A549 (cell line): ENCODE measurements at regions of chr20 and their contacts with region 1.

Region 1: DNA sequence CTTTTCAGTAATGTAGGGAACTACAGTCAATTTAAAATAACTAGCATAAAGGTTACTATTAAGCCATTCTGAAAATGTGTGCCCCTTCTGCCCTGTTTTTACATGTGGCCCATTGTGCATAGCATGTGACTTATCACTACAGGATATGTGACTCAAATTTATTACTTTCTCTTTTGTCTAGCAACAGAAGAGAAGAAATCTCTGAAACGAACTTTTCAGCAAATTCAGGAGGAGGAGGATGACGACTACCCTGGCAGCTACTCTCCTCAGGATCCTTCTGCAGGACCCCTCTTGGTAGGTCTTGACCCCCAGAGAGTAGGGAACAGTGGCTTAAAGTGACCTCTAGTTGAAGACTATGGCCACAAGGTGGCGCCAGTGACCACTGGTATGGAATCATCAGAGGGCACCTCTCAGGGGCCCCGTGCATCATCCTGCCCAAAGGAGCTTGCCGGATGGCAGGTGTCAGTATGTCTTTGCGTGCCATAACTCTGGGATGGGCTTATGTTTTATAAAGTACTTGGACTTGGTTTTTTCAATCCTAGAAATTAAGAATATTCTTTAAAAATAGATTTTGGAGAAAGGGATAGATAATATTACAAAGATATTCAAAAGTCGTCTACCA is 23.9 kb downstream of the RPRD1B start:
- DNase-seq: peak; percentile 81 to 82
- ATAC-seq: peak; percentile 94 to 99
- H3K4me3 ChIP-seq: no peak overlapping the region
- H3K27ac ChIP-seq: peak overlapping the region; percentile 29 to 47; a peak in 1 of 6 replicates
- H3K4me1 ChIP-seq: peaks cover 26% of the 10 kb centered on the region
- CTCF ChIP-seq: peak; percentile 96
- EP300 ChIP-seq: no peak
- POLR2A ChIP-seq: no peak
- RAD21 ChIP-seq: peak; percentile 96 to 98

Region 2: GRCh38 chr20:38073307-38074071 is 16.0 kb after region 1 on chr20:
- CTCF ChIA-PET with region 1: interaction called, 35 read pairs
- POLR2A ChIA-PET with region 1: no interaction called
- DNase-seq: peak in 1 of 2 experiments; percentile 22
- ATAC-seq: peak in 1 of 2 experiments; percentile 26; a peak in 1 of 6 replicates
- H3K4me3 ChIP-seq: no peak overlapping the region
- H3K27ac ChIP-seq: no peak overlapping the region
- H3K4me1 ChIP-seq: no peaks in the 10 kb centered on the region
- CTCF ChIP-seq: peak; percentile 46
- EP300 ChIP-seq: no peak
- POLR2A ChIP-seq: no peak
- RAD21 ChIP-seq: peak; percentile 25 to 40; a peak in 4 of 5 replicates

Region 3: DNA sequence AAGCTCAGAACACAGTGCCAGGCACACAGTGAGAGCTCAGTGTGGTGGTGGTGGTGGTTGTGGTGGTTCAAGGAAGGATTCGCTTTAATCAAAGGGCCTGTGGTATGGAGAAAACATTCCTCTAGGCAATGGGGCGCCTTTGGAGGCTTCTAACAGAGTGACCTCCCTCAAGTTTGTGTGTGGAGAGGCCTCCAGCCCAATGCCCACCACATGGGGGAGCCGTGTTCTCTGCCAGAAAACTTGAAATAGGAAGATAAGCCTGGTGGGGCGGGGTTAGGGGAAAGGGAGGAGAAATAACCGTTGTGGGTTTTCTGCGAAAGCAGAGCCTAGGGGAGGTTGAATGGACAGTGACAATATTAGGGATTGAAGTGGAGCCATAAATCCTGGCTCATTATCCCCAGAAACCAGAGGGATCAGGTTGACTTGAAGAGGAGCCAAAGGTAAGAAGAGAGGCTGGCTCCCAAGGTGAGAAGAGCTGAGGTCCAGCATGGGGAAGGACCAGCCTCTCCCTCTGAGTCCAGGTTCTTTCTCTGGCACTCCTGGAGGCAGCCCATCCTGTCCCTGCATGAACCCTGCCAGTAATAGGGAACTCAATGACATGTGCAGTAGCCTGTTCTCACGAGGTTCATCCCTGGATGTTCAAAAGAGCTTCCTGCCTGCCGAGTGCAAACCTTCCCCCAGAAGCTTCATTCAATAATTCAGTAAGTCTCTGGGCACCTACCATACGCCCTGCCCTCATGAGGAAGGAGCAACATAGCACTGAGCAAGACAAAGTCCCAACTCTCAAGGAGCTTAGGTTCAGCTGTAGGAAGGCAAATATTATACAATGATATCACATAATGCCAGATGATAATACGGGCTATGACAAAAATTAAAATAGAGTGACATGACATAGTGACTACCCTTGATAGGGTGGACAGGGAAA is 56.2 kb after region 1 on chr20:
- CTCF ChIA-PET with region 1: interaction called, 14 read pairs
- POLR2A ChIA-PET with region 1: interaction called, 6 read pairs
- DNase-seq: peak in 1 of 2 experiments; percentile 67
- ATAC-seq: peak in 1 of 2 experiments; percentile 61; a peak in 3 of 6 replicates
- H3K4me3 ChIP-seq: no peak overlapping the region
- H3K27ac ChIP-seq: peak overlapping the region; percentile 80 to 88
- H3K4me1 ChIP-seq: peaks cover 60% of the 10 kb centered on the region
- CTCF ChIP-seq: peak; percentile 35; the same call in 2 of the 3 replicates
- EP300 ChIP-seq: no peak
- POLR2A ChIP-seq: no peak
- RAD21 ChIP-seq: peak; percentile 43 to 62

Region 4: GRCh38 chr20:38143646-38144554 is 86.4 kb after region 1 on chr20:
- CTCF ChIA-PET with region 1: interaction called, 28 read pairs
- POLR2A ChIA-PET with region 1: interaction called, 3 read pairs
- DNase-seq: peak; percentile 63 to 91
- ATAC-seq: peak; percentile 69 to 74
- H3K4me3 ChIP-seq: no peak overlapping the region
- H3K27ac ChIP-seq: peak overlapping the region; percentile 83 to 95
- H3K4me1 ChIP-seq: peaks cover 75% of the 10 kb centered on the region
- CTCF ChIP-seq: no peak
- EP300 ChIP-seq: no peak
- POLR2A ChIP-seq: no peak
- RAD21 ChIP-seq: no peak

Region 5: DNA sequence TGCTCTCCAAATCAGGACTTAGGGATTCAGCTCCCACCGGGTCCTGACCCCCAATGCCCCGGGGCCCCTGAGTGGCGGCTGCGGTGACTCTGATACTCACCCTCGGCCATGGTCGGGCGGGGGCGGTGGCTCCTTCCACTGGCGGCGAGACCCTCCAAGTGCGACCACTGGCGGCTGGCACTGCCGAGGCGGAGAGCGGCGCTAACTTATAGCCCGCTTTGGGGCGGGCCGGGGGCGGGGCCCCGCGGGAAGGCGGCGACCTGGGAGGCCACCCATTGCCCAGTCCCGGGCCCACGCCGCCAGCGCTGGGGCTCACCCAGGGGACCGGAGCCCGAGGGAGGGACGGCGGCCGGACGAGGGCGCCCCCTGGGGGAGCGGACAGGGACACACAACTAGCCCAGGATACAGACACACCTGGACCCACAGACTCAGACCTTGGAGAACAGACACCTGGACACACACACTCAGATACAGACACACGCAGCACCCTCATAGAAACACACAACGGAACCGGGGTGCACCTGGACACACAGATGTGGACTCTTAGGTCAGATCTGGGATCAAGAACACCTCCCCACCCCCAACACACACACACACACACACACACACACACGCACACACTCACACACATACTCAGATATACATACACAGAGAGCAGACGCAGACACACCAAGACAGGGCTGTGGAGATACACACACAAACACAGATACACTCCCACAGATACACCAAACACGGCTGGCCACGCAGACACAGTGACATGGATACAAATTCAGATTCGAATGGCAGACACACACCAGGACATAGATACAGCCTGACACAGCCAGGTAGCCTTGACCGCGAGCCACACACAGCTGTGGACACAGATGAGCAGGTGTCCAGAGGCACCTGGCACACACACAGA is 107.9 kb after region 1 on chr20 and contains the start of gene TGM2:
- CTCF ChIA-PET with region 1: interaction called, 182 read pairs
- POLR2A ChIA-PET with region 1: interaction called, 3 read pairs
- DNase-seq: peak; percentile 73 to 86
- ATAC-seq: peak; percentile 68 to 88
- H3K4me3 ChIP-seq: peak within 1 kb of the TSS; percentile 62
- H3K27ac ChIP-seq: peak within 1 kb of the TSS; percentile 91 to 93
- H3K4me1 ChIP-seq: peaks cover 84% of the 10 kb centered on the region
- CTCF ChIP-seq: peak; percentile 88
- EP300 ChIP-seq: no peak
- POLR2A ChIP-seq: peak; percentile 89
- RAD21 ChIP-seq: peak; percentile 80 to 93
- polyA plus RNA-seq, gene TGM2: 173 TPM in 2 replicates

Region 6: GRCh38 chr20:38196592-38196991 is 139.1 kb after region 1 on chr20:
- CTCF ChIA-PET with region 1: interaction called, 15 read pairs
- POLR2A ChIA-PET with region 1: no interaction called
- DNase-seq: no peak
- ATAC-seq: peak in 1 of 2 experiments; percentile 40; a peak in 3 of 6 replicates
- H3K4me3 ChIP-seq: no peak overlapping the region
- H3K27ac ChIP-seq: peak overlapping the region in 1 of 2 experiments; percentile 51; a peak in 3 of 6 replicates
- H3K4me1 ChIP-seq: peaks cover 26% of the 10 kb centered on the region
- CTCF ChIP-seq: no peak
- EP300 ChIP-seq: no peak
- POLR2A ChIP-seq: no peak
- RAD21 ChIP-seq: no peak